Esophagus squamous epithelium (tissue), 5 donors: ENCODE measurements at regions of chr11 and their contacts with region 1.

Region 1: GRCh38 chr11:2151500-2152257 is 9.3 kb downstream of the INS start:
- DNase-seq: no peak
- H3K4me3 ChIP-seq: peak overlapping the region in 1 of 4 donors; percentile 18
- H3K27ac ChIP-seq: peak overlapping the region in 1 of 4 donors; percentile 6
- H3K4me1 ChIP-seq: peaks cover 4 to 14% (median 6%) of the 10 kb centered on the region in 3 donors
- H3K27me3 ChIP-seq: peaks cover 0 to 81% (median 9%) of the 10 kb centered on the region in 4 donors
- CTCF ChIP-seq: peak; percentile 69 to 95 (median 89)
- POLR2A ChIP-seq: no peak

Region 2: GRCh38 chr11:1652771-1653540 is 498.7 kb before region 1 on chr11:
- intact Hi-C with region 1: loop called (anchors 5 kb)
- DNase-seq: no peak
- H3K4me3 ChIP-seq: no peak overlapping the region
- H3K27ac ChIP-seq: no peak overlapping the region
- H3K4me1 ChIP-seq: peaks cover 4 to 32% (median 4%) of the 10 kb centered on the region in 3 donors
- H3K27me3 ChIP-seq: peaks cover 0 to 41% (median 0%) of the 10 kb centered on the region in 4 donors
- CTCF ChIP-seq: peak; percentile 94 to 99 (median 98)
- POLR2A ChIP-seq: no peak

Region 3: GRCh38 chr11:2269601-2270321 is 118.1 kb after region 1 on chr11:
- intact Hi-C with region 1: no loop called
- DNase-seq: no peak
- H3K4me3 ChIP-seq: peak overlapping the region; percentile 33 to 67 (median 56)
- H3K27ac ChIP-seq: peak overlapping the region; percentile 60 to 84 (median 80)
- H3K4me1 ChIP-seq: peaks cover 25 to 50% (median 32%) of the 10 kb centered on the region in 3 donors
- H3K27me3 ChIP-seq: peaks cover 0 to 82% (median 4%) of the 10 kb centered on the region in 4 donors
- CTCF ChIP-seq: peak in 5 of 6 experiments; percentile 9 to 49 (median 19)
- POLR2A ChIP-seq: no peak